ENCODE measurements at regions of chr13 and their contacts with region 1.

Region 1: DNA sequence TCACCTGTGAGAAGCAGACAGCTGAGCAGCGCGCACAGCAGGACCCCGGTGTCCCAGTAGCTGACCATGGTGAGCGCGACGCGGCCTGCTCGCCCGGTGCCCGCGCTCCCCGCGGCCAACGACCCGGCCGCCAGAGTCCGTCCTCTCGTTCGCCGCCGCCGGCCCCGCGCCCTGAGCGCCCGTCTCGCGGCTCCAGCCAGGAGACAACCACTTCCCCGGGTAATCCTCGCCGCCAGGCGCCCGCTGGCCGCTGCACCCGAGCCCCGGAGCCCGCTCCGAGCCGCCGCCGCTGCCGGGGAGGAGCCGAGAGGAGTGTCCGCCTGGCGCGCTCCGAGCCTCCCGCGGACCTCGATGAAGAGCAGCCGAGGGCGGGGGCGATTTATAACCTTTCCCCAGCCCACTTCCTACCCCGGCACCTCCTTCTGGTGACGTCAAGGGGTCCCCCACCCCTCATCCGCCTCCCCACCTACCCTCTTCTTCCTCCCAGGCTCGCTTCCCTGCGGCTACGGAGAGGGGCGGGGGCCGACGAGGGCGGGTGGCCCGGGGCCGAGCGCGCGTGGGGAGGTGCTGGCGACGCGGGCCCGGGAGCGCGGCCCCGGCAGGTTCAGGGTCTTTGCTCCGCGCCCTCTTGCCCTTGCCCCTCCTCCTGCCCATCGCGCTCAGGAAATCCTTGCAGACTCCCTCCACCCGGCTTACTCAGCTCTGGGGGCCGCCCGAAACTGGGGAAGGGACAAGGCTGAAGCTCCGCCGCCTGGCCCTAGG is at the start of gene FLT1:
- DNase-seq: peak; percentile 78 to 89 (median 87)
- ATAC-seq: peak; percentile 82 to 87 (median 85)
- H3K4me3 ChIP-seq: peak within 1 kb of the TSS; percentile 63 to 90 (median 78)
- H3K27ac ChIP-seq: peak within 1 kb of the TSS; percentile 76 to 96 (median 92)
- H3K4me1 ChIP-seq: peaks cover 0 to 34% (median 17%) of the 10 kb centered on the region in 12 donors
- H3K27me3 ChIP-seq: peaks cover 0 to 64% (median 48%) of the 10 kb centered on the region in 9 donors
- CTCF ChIP-seq: no peak
- POLR2A ChIP-seq: peak in 1 of 2 donors; percentile 93
- total RNA-seq, gene FLT1: 25.7 to 73.2 (median 43.9) TPM

Region 2: DNA sequence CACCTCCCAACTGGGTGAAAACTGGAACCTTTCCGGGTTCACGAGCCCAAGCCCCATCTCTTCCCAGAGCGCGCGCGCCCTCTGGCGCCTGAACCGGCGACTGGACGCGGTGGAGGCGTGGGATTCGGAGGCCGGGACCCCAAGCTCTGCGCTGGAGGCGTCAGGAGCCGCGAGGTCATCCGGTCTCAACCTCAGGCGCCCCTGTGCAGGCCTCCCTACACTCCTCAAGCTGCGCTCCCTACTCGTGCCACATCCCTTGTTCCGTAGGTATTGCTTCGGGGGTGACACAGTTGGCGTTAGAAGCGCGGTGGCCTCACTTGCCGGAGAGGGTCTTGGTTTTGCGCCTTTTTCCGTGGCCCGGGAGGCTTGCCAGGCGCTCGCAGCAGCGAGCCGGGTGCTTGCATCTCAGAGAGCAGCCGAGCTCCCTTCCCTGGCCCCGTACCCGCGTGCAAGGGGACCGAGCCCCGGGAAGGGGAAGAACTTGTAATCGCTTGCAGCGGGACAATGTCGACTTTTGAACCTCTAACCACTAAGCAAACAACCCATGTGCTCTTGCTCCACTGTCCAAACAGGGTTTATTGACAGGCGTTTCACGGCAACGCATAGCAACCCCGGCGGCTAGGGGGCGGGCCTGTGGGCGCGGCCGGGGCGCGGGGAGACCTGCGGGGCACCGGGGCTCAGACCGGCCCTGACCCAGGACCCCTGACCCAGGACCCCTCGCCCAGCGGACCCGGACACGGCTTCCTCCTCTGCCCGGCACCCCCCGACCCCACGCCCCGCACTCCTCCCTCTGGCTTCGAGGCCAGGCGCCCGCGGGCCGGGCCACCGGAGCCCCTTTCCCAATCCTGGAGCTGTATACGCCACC is 534.4 kb before region 1 on chr13:
- intact Hi-C with region 1: no loop called
- DNase-seq: no peak
- ATAC-seq: peak in 3 of 4 donors; percentile 49 to 74 (median 56)
- H3K4me3 ChIP-seq: peak overlapping the region in 11 of 12 donors; percentile 8 to 44 (median 33)
- H3K27ac ChIP-seq: no peak overlapping the region
- H3K4me1 ChIP-seq: peaks cover 0 to 18% (median 12%) of the 10 kb centered on the region in 12 donors
- H3K27me3 ChIP-seq: peaks cover 58 to 100% (median 94%) of the 10 kb centered on the region in 9 donors
- CTCF ChIP-seq: peak in 9 of 12 donors; percentile 10 to 48 (median 43)
- POLR2A ChIP-seq: no peak

Region 3: DNA sequence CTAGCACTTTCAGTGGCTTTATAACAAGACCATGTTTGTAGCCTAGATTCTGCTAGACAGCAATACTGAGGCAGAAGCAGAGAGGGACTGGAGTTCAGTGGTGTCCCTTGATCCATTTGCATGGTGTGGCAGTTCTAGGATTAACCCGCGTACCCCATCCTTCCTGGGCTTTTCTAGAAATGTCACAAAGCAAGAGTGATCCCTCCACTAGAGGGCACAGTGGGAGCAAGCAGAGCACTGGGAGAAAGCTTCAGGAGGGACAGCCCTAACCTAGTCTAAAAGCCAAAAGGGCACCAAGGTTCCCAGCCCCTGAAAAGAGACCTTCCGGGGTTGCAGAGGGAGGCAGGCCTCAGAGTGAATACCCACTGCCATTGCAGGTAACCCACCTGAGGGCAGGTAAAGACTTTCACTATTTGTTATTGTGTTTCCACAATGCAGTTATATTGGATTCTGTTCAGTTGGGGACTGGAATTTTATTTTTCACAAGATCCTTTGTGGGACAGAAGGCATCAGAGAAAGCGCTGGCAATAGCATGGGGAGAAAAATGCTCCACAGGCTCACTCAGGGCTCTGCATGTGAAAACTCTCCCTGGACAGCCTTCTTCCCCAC is 170.7 kb before region 1 on chr13:
- intact Hi-C with region 1: loop called in 5 of 10 experiments (anchors 5 to 10 kb)
- DNase-seq: peak in 4 of 5 donors; percentile 50 to 70 (median 62)
- ATAC-seq: peak; percentile 72 to 88 (median 81)
- H3K4me3 ChIP-seq: peak overlapping the region in 1 of 12 donors; percentile 11
- H3K27ac ChIP-seq: peak overlapping the region in 11 of 12 donors; percentile 10 to 82 (median 63)
- H3K4me1 ChIP-seq: peaks cover 4 to 55% (median 25%) of the 10 kb centered on the region in 12 donors
- H3K27me3 ChIP-seq: no peaks in the 10 kb centered on the region
- CTCF ChIP-seq: peak; percentile 67 to 91 (median 79)
- POLR2A ChIP-seq: no peak

Region 4: DNA sequence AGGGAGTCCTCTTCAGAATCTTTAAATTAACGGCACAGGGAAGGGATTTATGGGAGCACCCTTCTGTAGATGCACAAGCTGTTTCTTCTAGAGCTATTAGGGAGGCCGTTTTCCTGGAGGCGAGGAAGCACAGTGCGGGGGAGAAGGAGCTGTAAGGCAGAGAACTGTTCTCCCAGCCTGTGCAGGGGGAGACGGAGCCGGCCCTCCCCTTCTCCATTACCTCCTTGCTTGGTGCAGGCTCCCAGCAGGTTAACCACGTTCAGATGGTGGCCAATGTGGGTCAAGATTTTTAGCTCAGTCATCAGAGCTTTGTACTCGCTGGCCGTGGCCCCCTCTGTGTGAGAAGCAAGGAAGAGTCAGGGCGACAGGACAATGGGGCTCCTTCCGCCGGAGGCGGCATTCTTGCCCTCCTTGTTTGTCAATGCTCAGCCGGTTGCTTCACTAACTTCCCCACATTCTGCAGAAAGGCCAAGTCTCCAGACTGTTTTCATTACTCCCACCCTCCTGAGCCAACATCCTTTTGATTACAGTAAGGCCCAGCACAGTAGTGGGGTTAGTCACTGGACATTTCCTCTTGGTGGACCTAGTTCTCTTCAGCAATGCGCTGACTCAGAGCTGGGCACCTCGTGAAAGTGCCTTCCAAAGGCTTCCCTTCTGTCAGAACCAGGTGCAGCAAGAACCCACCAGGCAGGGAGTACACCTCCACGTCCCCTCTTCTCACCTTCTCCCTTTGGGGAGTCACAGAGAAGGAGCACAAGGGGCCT is 165.4 kb before region 1 on chr13:
- intact Hi-C with region 1: loop called in 6 of 10 experiments (anchors 5 to 10 kb)
- DNase-seq: peak in 2 of 5 donors; percentile 27 to 45
- ATAC-seq: peak in 3 of 4 donors; percentile 83 to 86 (median 86)
- H3K4me3 ChIP-seq: no peak overlapping the region
- H3K27ac ChIP-seq: peak overlapping the region in 7 of 12 donors; percentile 16 to 53 (median 41)
- H3K4me1 ChIP-seq: peaks cover 2 to 41% (median 20%) of the 10 kb centered on the region in 12 donors
- H3K27me3 ChIP-seq: no peaks in the 10 kb centered on the region
- CTCF ChIP-seq: no peak
- POLR2A ChIP-seq: no peak

Region 5: GRCh38 chr13:28379371-28380083 is 115.4 kb before region 1 on chr13:
- intact Hi-C with region 1: no loop called
- DNase-seq: no peak
- ATAC-seq: no peak
- H3K4me3 ChIP-seq: no peak overlapping the region
- H3K27ac ChIP-seq: no peak overlapping the region
- H3K4me1 ChIP-seq: peaks cover 0 to 28% (median 18%) of the 10 kb centered on the region in 12 donors
- H3K27me3 ChIP-seq: peaks cover 0 to 24% (median 0%) of the 10 kb centered on the region in 9 donors
- CTCF ChIP-seq: no peak
- POLR2A ChIP-seq: no peak

Region 6: DNA sequence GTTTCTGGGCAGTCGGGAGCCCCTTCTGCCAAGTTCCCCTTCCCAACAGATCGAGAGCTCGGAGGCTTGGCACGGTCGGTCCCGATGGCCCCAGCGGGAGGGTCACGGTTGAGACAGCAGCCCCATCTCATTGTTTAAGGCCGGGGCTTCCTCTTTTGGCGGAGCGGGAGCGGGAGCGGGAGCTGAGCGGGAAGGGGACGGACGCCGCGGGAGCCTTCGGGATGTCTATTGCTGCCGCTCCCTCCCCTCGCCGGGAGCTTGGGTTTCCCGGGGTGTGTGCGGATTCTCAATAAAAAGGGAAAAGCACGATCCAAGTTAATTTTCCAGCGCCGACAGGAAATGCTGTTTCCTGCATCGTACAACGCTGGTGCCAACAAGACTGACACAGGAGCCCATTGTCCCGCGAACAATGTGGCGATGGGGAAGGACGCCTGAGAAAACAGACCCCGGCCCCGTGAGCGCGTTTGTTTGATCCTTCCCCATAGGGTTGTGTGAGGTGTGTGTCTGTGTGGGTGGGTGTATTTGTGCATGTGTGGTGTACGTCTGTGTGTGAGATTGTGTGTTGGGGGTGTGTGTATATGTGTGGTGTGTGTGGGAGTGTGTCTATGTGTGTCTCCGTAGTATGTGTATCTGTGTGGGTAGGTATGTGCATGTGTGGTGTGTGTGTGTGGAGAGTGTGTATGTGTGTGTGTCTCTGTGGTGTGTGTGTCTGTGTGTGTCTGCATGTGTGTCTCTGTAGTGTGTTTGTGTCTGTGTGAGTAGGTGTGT is 36.3 kb after region 1 on chr13:
- intact Hi-C with region 1: loop called in 5 of 10 experiments (anchors 2 to 5 kb)
- DNase-seq: peak; percentile 72 to 82 (median 76)
- ATAC-seq: peak; percentile 40 to 83 (median 68)
- H3K4me3 ChIP-seq: peak overlapping the region; percentile 1 to 67 (median 58)
- H3K27ac ChIP-seq: peak overlapping the region; percentile 55 to 90 (median 86)
- H3K4me1 ChIP-seq: peaks cover 0 to 32% (median 13%) of the 10 kb centered on the region in 12 donors
- H3K27me3 ChIP-seq: peaks cover 0 to 35% (median 15%) of the 10 kb centered on the region in 9 donors
- CTCF ChIP-seq: no peak
- POLR2A ChIP-seq: no peak

Region 7: DNA sequence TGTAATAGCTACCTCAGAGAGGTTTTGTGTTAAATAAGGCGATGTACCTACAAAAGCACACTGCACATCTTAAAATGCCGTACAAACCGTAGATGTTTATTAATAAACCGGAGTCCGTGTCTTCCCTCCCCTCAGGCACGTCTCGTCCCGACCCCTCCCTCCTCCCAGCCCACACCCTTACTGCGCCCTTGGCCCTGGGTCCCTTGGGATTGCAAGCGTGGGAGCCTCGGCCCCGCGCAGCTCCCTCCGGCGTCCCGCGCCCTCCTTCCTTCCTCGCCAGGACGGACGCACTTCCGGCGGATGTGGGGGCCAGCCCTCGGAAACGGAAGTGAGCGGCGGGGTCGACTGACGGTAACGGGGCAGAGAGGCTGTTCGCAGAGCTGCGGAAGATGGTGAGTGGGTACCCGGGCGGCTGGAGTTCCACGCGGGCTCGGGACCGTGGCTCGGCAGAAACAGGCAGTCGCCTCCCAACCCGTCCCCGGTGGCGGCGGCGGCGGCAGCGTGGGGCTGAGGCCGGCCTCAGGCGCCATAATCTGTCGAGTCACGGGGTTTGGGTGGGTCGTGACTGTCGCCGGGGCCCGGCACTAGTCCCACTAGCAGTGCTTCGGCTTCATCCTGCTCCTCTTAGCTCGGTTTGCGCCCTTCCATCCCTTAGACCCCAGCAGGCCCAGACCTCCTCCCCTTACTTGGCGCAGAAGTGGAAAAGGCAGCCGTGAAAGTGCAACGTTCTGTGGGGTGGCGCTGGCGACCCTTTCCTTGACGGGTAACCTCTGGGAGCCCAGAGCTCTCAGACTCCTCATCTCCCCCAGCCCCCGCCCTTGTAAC is 164.1 kb after region 1 on chr13 and contains the start of gene POMP:
- intact Hi-C with region 1: loop called in 1 of 10 experiments (anchors 10 kb)
- DNase-seq: peak; percentile 96 to 97 (median 96)
- ATAC-seq: peak; percentile 97 to 98 (median 98)
- H3K4me3 ChIP-seq: peak within 1 kb of the TSS; percentile 63 to 99 (median 88)
- H3K27ac ChIP-seq: peak within 1 kb of the TSS; percentile 88 to 99 (median 96)
- H3K4me1 ChIP-seq: peaks cover 10 to 71% (median 44%) of the 10 kb centered on the region in 12 donors
- H3K27me3 ChIP-seq: no peaks in the 10 kb centered on the region
- CTCF ChIP-seq: peak in 2 of 12 donors; percentile 3 to 9
- POLR2A ChIP-seq: peak; percentile 43 to 89
- total RNA-seq, gene POMP: 87.8 to 120 (median 102) TPM

Measured in heart left ventricle (tissue), 16 donors.